Cardiac septum (tissue), 1 donor: ENCODE measurements at regions of chr16 and their contacts with region 1.

Region 1: GRCh38 chr16:89860747-89861304 is 12.6 kb upstream of the TCF25 start:
- DNase-seq: peak; percentile 85

Region 2: GRCh38 chr16:89700100-89700648 is 160.7 kb before region 1 on chr16:
- intact Hi-C with region 1: loop called (anchors 2 kb)
- DNase-seq: peak; percentile 100